CD8-positive, alpha-beta memory T cell (primary cell): ENCODE measurements at regions of chr1 and their contacts with region 1.

Region 1: GRCh38 chr1:66300972-66301451 is 232.9 kb upstream of the SGIP1 start:
- DNase-seq: peak in 3 of 5 donors; percentile 49 to 62 (median 52)
- H3K4me3 ChIP-seq: peak overlapping the region; percentile 4
- H3K4me3 Mint-ChIP-seq: peak overlapping the region; percentile 11 to 92 (median 82)
- H3K27ac ChIP-seq: peak overlapping the region; percentile 17
- H3K27ac Mint-ChIP-seq: peak overlapping the region; percentile 83 to 99 (median 94)
- H3K4me1 ChIP-seq: peaks cover 32% of the 10 kb centered on the region
- H3K4me1 Mint-ChIP-seq: peaks cover 30 to 46% (median 44%) of the 10 kb centered on the region in 3 donors
- H3K27me3 ChIP-seq: no peaks in the 10 kb centered on the region
- H3K27me3 Mint-ChIP-seq: no peaks in the 10 kb centered on the region

Region 2: GRCh38 chr1:66231217-66231616 is 69.8 kb before region 1 on chr1:
- CTCF ChIA-PET with region 1: no interaction called
- POLR2A ChIA-PET with region 1: no interaction called
- DNase-seq: no peak
- H3K4me3 ChIP-seq: no peak overlapping the region
- H3K4me3 Mint-ChIP-seq: no peak overlapping the region
- H3K27ac ChIP-seq: no peak overlapping the region
- H3K27ac Mint-ChIP-seq: no peak overlapping the region
- H3K4me1 ChIP-seq: no peaks in the 10 kb centered on the region
- H3K4me1 Mint-ChIP-seq: no peaks in the 10 kb centered on the region
- H3K27me3 ChIP-seq: no peaks in the 10 kb centered on the region
- H3K27me3 Mint-ChIP-seq: peaks cover 3 to 30% of the 10 kb centered on the region in 2 donors

Region 3: GRCh38 chr1:66288048-66288447 is 13.0 kb before region 1 on chr1:
- CTCF ChIA-PET with region 1: no interaction called
- POLR2A ChIA-PET with region 1: no interaction called
- DNase-seq: no peak
- H3K4me3 ChIP-seq: no peak overlapping the region
- H3K4me3 Mint-ChIP-seq: peak overlapping the region in 2 of 7 donors; percentile 15 to 61
- H3K27ac ChIP-seq: no peak overlapping the region
- H3K27ac Mint-ChIP-seq: peak overlapping the region in 2 of 8 donors; percentile 46 to 55
- H3K4me1 ChIP-seq: peaks cover 34% of the 10 kb centered on the region
- H3K4me1 Mint-ChIP-seq: peaks cover 46 to 75% (median 65%) of the 10 kb centered on the region in 3 donors
- H3K27me3 ChIP-seq: no peaks in the 10 kb centered on the region
- H3K27me3 Mint-ChIP-seq: no peaks in the 10 kb centered on the region

Region 4: DNA sequence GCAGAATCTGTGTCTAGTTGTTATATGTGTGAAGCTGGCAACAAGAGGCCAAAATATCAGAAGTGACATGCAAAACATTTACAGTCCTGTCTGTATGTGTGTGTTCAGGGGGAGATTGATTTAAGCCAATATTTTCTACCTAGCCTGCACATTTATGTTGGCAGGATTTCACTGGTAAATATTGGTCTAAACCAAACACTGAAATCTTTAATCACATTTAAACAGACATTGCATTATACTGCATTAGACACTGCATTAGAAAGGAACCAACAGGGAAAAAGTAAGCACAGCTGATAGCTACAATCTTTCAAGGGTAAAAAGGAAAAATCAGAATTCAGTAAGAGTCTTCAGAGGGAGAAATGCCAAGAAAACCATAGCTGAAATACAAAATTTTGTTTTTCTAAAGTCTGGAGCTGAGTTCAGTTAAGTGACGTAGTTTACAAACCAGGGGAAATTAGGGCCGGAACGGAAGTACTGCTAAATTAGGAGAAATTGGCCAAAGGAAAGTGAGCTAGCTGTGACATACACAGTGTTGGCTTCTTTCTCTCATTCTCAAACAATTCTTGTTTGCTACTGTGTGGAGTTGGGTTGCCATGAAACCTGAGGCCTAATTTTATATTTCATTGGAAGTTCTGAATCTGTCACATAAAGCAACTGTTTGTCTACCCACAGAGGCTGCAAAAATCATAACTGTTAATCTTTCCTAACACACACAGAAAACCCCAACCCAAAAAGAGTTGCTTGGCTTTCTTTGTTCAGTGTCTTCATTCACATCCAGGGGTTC is 15.6 kb after region 1 on chr1:
- CTCF ChIA-PET with region 1: no interaction called
- POLR2A ChIA-PET with region 1: no interaction called
- DNase-seq: peak in 1 of 5 donors; percentile 31
- H3K4me3 ChIP-seq: no peak overlapping the region
- H3K4me3 Mint-ChIP-seq: no peak overlapping the region
- H3K27ac ChIP-seq: no peak overlapping the region
- H3K27ac Mint-ChIP-seq: peak overlapping the region in 1 of 8 donors; percentile 51
- H3K4me1 ChIP-seq: peaks cover 5% of the 10 kb centered on the region
- H3K4me1 Mint-ChIP-seq: peaks cover 0 to 8% (median 0%) of the 10 kb centered on the region in 3 donors
- H3K27me3 ChIP-seq: no peaks in the 10 kb centered on the region
- H3K27me3 Mint-ChIP-seq: no peaks in the 10 kb centered on the region

Region 5: GRCh38 chr1:66331657-66332547 is 30.9 kb after region 1 on chr1:
- CTCF ChIA-PET with region 1: interaction called, 24 read pairs
- POLR2A ChIA-PET with region 1: interaction called, 9 read pairs
- DNase-seq: peak; percentile 19 to 58 (median 41)
- H3K4me3 ChIP-seq: peak overlapping the region; percentile 75
- H3K4me3 Mint-ChIP-seq: peak overlapping the region; percentile 91 to 100 (median 99)
- H3K27ac ChIP-seq: peak overlapping the region; percentile 87
- H3K27ac Mint-ChIP-seq: peak overlapping the region; percentile 90 to 100 (median 98)
- H3K4me1 ChIP-seq: peaks cover 39% of the 10 kb centered on the region
- H3K4me1 Mint-ChIP-seq: peaks cover 54 to 78% (median 62%) of the 10 kb centered on the region in 3 donors
- H3K27me3 ChIP-seq: no peaks in the 10 kb centered on the region
- H3K27me3 Mint-ChIP-seq: peaks cover 0 to 4% of the 10 kb centered on the region in 2 donors